AG04449 (cell line): ENCODE measurements at regions of chr6 and their contacts with region 1.

Region 1: DNA sequence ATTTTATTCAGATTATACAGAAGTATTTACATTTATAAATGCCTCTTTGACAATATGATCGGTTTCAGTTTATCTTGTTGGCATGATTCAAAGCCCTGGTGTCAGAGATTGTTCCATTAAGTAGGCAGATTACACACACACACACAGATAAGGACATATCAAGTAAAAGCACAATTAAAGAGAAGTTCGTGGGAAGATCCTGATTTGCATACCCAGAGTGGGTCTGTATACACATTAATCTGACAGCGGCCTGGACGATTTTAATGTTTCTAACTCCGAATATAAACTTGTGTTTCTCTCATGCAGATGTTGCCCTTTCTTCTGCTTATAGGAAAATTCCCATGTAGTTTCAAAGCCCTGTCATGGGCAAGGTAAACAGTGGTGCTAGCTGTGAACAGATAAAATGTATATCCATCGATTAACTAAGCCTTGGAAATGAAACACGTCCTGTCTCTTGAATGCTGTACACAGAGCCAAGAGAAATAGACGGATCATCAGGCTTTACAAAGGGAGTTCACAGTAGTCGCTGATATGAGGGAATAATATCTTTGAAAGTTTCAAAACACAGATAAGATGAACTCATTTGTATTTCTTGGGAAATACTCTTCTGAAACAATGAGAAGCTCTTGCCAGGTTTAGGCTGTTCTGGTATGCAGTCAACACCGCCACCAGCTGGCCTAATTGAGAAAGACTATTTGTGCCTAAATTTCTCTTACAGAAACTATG is 108.2 kb upstream of the GMDS start:
- DNase-seq: peak; percentile 17
- H3K4me3 ChIP-seq: no peak overlapping the region
- CTCF ChIP-seq: peak; percentile 68

Region 2: DNA sequence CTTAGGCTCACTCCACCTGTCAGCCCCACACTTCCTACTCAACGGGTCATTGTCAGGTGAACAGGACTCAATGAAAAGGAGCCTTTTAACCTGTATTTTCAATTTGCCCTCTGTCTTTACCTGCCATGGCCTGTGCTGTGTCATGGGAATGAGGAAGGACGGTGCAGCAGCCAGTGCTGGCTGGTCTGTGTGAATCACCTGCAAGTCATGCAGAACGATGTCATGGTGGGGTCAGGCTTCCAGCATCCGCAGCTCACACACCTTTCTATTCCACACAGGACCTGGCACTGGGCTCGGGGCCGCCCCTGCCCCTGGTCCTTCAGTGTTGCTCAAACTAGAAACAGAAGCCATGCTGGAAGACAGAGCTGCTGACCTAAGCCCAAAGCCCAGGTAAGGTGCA is 80.5 kb after region 1 on chr6:
- CTCF ChIA-PET with region 1: interaction called, 12 read pairs
- POLR2A ChIA-PET with region 1: no interaction called
- DNase-seq: no peak
- H3K4me3 ChIP-seq: no peak overlapping the region
- CTCF ChIP-seq: no peak